ENCODE measurements at regions of chr3 and their contacts with region 1.

Region 1: DNA sequence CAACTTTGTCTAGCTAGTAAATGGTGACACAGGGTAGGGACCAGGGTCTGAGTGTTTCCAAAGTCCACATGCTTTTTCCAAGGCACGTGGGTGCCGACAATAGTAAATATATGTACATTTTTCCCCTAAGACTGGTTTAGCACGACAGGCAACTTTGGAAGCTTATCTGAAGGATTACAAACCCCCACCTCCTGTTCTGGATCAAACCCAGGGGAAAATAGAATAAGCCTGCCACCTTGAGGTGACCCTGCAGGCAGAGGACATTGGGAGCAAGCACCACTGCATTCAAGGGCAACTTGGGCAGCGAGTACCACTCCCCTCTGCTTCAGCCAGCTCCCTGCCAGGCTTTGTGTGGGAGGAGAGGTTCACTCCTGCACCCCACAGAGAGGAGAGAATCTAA is 44.8 kb downstream of the KBTBD12 start:
- DNase-seq: peak in 4 of 5 donors; percentile 36 to 60 (median 48)
- ATAC-seq: peak; percentile 11 to 68 (median 60)
- H3K4me3 ChIP-seq: no peak overlapping the region
- H3K27ac ChIP-seq: peak overlapping the region; percentile 18 to 90 (median 59)
- H3K4me1 ChIP-seq: peaks cover 0 to 36% (median 13%) of the 10 kb centered on the region in 12 donors
- H3K27me3 ChIP-seq: no peaks in the 10 kb centered on the region
- CTCF ChIP-seq: peak in 10 of 12 donors; percentile 23 to 64 (median 42)
- POLR2A ChIP-seq: no peak

Region 2: DNA sequence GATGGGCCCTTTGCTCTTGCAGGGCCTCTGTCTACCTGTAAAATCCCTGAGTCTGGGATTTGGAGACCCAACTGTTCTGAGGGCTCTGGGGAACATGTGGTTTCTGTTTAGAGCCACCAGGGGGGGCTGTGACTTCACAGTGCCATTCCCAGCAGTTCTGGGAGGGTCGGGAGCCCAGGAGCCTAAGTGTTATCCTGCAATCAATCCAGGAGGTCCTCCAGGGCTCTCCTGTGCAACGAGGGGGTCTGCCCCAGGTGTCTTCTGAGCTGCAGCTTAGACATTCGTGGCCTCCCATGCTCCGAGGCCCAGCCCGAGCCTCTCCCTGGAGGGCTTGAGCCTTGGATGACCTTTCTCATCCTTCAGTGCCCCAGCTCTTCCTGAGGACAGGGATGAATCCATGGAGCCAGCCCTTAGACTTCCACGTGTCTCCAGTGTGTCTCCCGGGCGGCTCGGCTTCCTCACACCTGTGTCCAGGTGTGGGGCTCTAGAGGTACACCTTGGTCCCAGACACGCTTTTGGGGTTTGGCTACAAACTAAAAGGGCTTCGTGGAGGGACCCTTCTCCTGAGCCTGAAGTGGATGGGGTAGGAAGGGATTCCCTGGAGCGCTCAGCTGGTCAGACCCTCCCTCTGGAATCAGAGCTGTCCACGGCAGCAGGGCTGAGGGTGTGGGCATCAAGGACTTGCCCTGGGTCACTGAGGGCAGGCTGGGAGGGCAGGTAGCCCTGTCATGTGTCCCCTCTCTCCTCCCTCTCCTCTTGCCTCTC is 307.4 kb before region 1 on chr3:
- intact Hi-C with region 1: loop called in 2 of 10 experiments (anchors 5 kb)
- DNase-seq: peak in 3 of 5 donors; percentile 55 to 61 (median 60)
- ATAC-seq: peak; percentile 64 to 89 (median 88)
- H3K4me3 ChIP-seq: peak overlapping the region in 1 of 12 donors; percentile 19
- H3K27ac ChIP-seq: no peak overlapping the region
- H3K4me1 ChIP-seq: peaks cover 0 to 12% (median 4%) of the 10 kb centered on the region in 12 donors
- H3K27me3 ChIP-seq: no peaks in the 10 kb centered on the region
- CTCF ChIP-seq: peak; percentile 83 to 96 (median 92)
- POLR2A ChIP-seq: no peak

Region 3: GRCh38 chr3:127762077-127762786 is 197.6 kb before region 1 on chr3:
- intact Hi-C with region 1: loop called in 1 of 10 experiments (anchors 10 kb)
- DNase-seq: peak in 4 of 5 donors; percentile 53 to 75 (median 60)
- ATAC-seq: peak; percentile 62 to 82 (median 73)
- H3K4me3 ChIP-seq: peak overlapping the region in 2 of 12 donors; percentile 23 to 29
- H3K27ac ChIP-seq: peak overlapping the region; percentile 51 to 88 (median 68)
- H3K4me1 ChIP-seq: peaks cover 0 to 66% (median 48%) of the 10 kb centered on the region in 12 donors
- H3K27me3 ChIP-seq: no peaks in the 10 kb centered on the region
- CTCF ChIP-seq: no peak
- POLR2A ChIP-seq: no peak

Region 4: DNA sequence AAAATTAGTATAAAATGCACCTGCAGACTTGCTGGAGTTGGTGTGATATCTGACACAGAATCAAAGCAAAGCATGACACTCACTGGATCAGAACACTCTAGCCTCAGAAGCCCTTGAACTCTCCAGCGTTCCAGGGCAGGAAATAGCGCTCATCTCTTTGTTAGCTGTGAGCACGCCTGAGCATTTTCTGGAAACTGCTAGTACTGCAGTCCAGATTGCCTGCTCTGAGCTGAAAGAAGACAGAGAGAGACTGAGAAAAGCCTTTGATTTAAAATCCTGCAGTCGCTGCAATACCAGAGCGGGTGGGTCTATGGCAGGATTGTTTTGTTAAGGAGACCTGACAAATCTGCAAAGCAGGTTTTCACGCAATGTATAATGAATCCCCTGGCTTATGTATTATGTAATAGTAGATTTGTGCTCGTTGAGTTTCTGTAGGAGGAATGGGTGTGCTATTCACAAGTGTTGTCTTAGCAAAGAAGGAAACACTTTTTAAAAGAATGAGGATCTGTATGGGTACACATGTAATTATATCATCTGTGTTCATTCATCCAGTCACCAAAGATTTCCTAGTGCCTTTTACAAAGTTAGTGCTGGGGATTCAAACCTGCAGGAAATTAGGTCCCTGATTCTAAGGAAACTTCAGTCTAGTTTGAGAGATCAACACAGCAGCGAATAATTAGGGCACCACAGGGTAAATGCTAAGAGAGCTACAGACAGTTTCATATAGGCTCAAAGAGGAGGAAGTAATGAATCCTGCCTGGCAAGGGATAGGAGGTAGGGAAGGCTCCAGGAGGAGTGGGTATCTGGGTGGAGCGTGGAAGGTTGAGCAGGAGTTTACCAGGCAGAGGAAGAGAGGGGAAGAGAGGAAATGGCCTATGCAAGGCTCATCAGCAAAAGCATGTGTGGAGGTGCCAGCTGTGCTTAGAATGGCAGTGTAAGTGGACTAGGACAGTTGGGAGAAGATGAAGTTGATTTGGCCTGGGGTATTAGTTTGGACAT is 111.4 kb before region 1 on chr3:
- intact Hi-C with region 1: loop called in 2 of 10 experiments (anchors 10 kb)
- DNase-seq: no peak
- ATAC-seq: peak in 2 of 4 donors; percentile 41 to 64
- H3K4me3 ChIP-seq: no peak overlapping the region
- H3K27ac ChIP-seq: no peak overlapping the region
- H3K4me1 ChIP-seq: peaks cover 0 to 7% (median 0%) of the 10 kb centered on the region in 12 donors
- H3K27me3 ChIP-seq: no peaks in the 10 kb centered on the region
- CTCF ChIP-seq: no peak
- POLR2A ChIP-seq: no peak

Region 5: GRCh38 chr3:127915115-127915936 is 44.5 kb before region 1 on chr3 and contains the start of gene KBTBD12:
- intact Hi-C with region 1: loop called in 1 of 10 experiments (anchors 5 kb)
- DNase-seq: peak; percentile 70 to 84 (median 77)
- ATAC-seq: peak; percentile 82 to 95 (median 95)
- H3K4me3 ChIP-seq: peak within 1 kb of the TSS; percentile 34 to 69 (median 54)
- H3K27ac ChIP-seq: peak within 1 kb of the TSS; percentile 57 to 91 (median 82)
- H3K4me1 ChIP-seq: peaks cover 0 to 39% (median 19%) of the 10 kb centered on the region in 12 donors
- H3K27me3 ChIP-seq: peaks cover 0 to 19% (median 0%) of the 10 kb centered on the region in 9 donors
- CTCF ChIP-seq: peak in 2 of 12 donors; percentile 24 to 28
- POLR2A ChIP-seq: peak; percentile 12 to 46
- total RNA-seq, gene KBTBD12: 24.3 to 47.1 (median 31.9) TPM